Left ventricle myocardium inferior (tissue), 1 donor: ENCODE measurements at regions of chr9 and their contacts with region 1.

Region 1: DNA sequence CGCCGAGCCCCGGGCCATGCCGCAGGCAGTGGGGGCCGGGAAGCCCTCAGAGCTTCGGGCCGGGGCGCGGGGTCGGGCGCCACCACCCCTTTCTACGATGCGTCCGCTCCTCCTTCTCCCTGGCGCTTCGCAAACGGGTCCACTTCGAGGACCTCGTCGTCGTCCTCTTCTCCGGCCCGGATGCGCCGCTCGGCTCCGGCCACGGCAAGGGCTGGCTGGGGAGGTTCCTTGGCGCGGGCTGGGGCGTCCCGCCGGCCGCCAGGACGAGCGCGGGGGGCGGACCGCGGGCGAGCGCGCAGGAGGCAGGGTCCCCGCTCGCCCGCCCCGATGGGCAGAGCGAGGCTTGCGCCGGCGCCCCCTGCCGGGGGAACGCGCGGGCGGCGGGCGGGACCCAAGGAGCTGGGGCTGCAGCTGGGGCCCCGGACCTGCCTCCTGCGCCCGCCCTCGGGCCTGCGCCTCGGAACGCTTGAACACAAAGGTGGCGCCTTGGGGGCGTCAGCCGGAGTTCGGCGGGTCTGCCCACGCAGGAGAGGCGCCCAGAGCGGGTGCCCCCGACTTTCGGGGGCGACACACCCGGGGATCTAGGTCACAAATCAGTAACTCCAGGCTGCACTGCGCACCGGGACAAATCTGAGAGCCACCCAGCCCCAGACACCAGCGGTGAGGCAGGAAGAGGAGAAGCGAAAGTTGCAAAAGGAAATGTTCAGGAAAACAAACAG is at the start of gene ROR2:
- DNase-seq: peak; percentile 67
- H3K4me3 ChIP-seq: peak within 1 kb of the TSS; percentile 67
- H3K27ac ChIP-seq: peak within 1 kb of the TSS; percentile 33
- H3K4me1 ChIP-seq: peaks cover 22% of the 10 kb centered on the region
- H3K27me3 ChIP-seq: peaks cover 89% of the 10 kb centered on the region
- CTCF ChIP-seq: peak; percentile 71
- total RNA-seq, gene ROR2: 0.74 TPM

Region 2: GRCh38 chr9:91775011-91775707 is 174.9 kb before region 1 on chr9:
- intact Hi-C with region 1: loop called (anchors 10 kb)
- DNase-seq: peak; percentile 60
- H3K4me3 ChIP-seq: no peak overlapping the region
- H3K27ac ChIP-seq: no peak overlapping the region
- H3K4me1 ChIP-seq: no peaks in the 10 kb centered on the region
- H3K27me3 ChIP-seq: peaks cover 56% of the 10 kb centered on the region
- CTCF ChIP-seq: peak; percentile 82